ENCODE measurements at regions of chr20 and their contacts with region 1.

Region 1: DNA sequence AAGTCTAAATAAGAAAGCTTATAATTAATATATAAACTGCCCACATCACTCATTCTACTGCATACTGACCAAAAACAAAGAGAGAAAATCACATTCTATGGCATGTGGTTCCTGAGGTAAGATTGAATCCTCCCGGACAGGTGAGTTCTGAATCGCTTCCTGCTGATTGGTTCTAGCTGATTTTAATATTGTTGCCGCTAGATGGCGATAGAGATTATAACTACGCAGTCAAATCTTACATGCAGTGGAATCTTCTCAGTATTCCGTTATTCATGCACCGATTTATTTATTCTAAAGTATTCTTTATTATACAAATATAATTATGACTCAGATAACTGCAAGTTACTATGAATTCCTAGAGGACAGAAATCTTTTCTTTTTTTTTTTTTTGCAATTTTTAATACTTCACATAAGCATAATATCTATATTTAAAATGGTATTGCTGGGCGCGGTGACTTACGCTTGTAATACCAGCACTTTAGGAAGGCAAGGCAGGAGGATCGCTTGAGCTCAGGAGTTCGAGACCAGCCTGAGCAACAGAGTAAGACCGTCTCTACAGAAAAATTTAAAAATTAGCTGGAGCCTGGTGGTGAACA is 24.2 kb upstream of the TMX4 start:
- DNase-seq: no peak
- H3K4me3 ChIP-seq: no peak overlapping the region
- H3K27ac ChIP-seq: no peak overlapping the region
- H3K27me3 ChIP-seq: no peaks in the 10 kb centered on the region
- CTCF ChIP-seq: peak; percentile 69

Region 2: DNA sequence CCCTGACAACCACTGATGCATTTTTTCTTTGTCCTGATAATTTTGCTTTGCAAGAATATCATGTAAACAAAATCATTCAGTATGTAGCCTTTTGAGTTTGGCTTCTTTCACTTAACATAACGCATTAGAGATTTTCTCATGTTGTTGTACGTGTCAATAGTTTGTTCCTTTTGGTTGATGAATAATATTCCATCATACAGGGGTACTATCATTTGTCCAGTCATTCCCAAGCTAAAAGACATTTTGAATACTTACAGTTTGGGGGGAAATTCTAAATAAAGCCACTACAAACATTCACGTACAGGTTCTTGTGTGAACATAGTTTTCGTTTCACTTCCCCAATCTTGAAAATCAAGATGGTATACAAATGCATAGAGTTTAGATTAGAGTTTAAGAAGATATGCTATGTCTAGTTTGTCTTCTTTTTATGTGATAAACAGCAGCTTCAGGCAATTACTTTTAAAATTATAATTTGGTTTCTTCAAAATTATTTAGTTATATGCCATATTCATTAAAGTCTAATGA is 108.7 kb before region 1 on chr20:
- CTCF ChIA-PET with region 1: interaction called, 38 read pairs
- POLR2A ChIA-PET with region 1: no interaction called
- DNase-seq: no peak
- H3K4me3 ChIP-seq: no peak overlapping the region
- H3K27ac ChIP-seq: no peak overlapping the region
- H3K27me3 ChIP-seq: peaks cover 3% of the 10 kb centered on the region
- CTCF ChIP-seq: no peak

Region 3: GRCh38 chr20:8077137-8077466 is 33.3 kb after region 1 on chr20:
- CTCF ChIA-PET with region 1: interaction called, 10 read pairs
- POLR2A ChIA-PET with region 1: no interaction called
- DNase-seq: no peak
- H3K4me3 ChIP-seq: no peak overlapping the region
- H3K27ac ChIP-seq: no peak overlapping the region
- H3K27me3 ChIP-seq: no peaks in the 10 kb centered on the region
- CTCF ChIP-seq: no peak

Region 4: GRCh38 chr20:8131598-8132483 is 88.1 kb after region 1 on chr20 and contains the start of gene PLCB1:
- CTCF ChIA-PET with region 1: interaction called, 57 read pairs
- POLR2A ChIA-PET with region 1: no interaction called
- DNase-seq: peak; percentile 66
- H3K4me3 ChIP-seq: peak within 1 kb of the TSS; percentile 75
- H3K27ac ChIP-seq: peak within 1 kb of the TSS; percentile 58
- H3K27me3 ChIP-seq: no peaks in the 10 kb centered on the region
- CTCF ChIP-seq: peak; percentile 94
- polyA plus RNA-seq, gene PLCB1: 12.3 and 16.4 TPM in 2 replicates

Region 5: GRCh38 chr20:8535403-8536261 is 491.8 kb after region 1 on chr20:
- CTCF ChIA-PET with region 1: interaction called, 22 read pairs
- POLR2A ChIA-PET with region 1: no interaction called
- DNase-seq: no peak
- H3K4me3 ChIP-seq: no peak overlapping the region
- H3K27ac ChIP-seq: no peak overlapping the region
- H3K27me3 ChIP-seq: no peaks in the 10 kb centered on the region
- CTCF ChIP-seq: peak; percentile 70

Measured in AG04450 (cell line).